ENCODE measurements at regions of chr11 and their contacts with region 1.

Region 1: DNA sequence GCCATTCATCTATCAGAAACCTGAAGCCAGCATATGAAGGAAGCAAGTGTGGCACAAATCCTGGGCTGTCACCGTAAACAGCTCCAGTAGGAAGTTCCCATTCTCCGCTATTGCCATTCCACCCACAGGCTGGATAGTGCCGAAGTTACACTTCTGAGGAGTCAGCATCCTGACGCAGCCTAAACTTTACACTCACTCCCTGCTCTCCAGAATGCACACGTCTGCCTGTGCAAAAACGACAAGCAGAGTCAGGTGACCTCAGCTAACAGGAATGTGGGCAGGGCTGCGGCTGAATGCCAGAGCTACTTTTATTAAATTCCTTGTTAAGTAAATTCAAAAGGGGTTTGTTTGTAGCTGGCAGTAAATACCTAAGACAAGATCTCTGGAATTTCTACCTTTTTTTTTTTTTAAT is 33.7 kb downstream of the NFRKB start:
- DNase-seq: no peak
- ATAC-seq: no peak
- H3K4me3 ChIP-seq: no peak overlapping the region
- H3K4me3 Mint-ChIP-seq: peak overlapping the region in 3 of 10 donors; percentile 22 to 69 (median 58)
- H3K27ac ChIP-seq: peak overlapping the region; percentile 25
- H3K27ac Mint-ChIP-seq: peak overlapping the region; percentile 84 to 98 (median 95)
- H3K4me1 ChIP-seq: peaks cover 0 to 37% of the 10 kb centered on the region in 2 donors
- H3K4me1 Mint-ChIP-seq: peaks cover 19 to 70% (median 54%) of the 10 kb centered on the region in 7 donors
- H3K27me3 ChIP-seq: no peaks in the 10 kb centered on the region
- H3K27me3 Mint-ChIP-seq: no peaks in the 10 kb centered on the region

Region 2: GRCh38 chr11:129766898-129767604 is 94.7 kb before region 1 on chr11:
- CTCF ChIA-PET with region 1: no interaction called
- POLR2A ChIA-PET with region 1: no interaction called
- intact Hi-C with region 1: loop called in 1 of 2 experiments (anchors 5 kb)
- DNase-seq: peak in 6 of 9 donors; percentile 14 to 39 (median 20)
- ATAC-seq: peak; percentile 40
- H3K4me3 ChIP-seq: no peak overlapping the region
- H3K4me3 Mint-ChIP-seq: peak overlapping the region in 2 of 10 donors; percentile 1 to 50
- H3K27ac ChIP-seq: no peak overlapping the region
- H3K27ac Mint-ChIP-seq: peak overlapping the region in 2 of 9 donors; percentile 6 to 29
- H3K4me1 ChIP-seq: no peaks in the 10 kb centered on the region
- H3K4me1 Mint-ChIP-seq: peaks cover 0 to 11% (median 5%) of the 10 kb centered on the region in 7 donors
- H3K27me3 ChIP-seq: no peaks in the 10 kb centered on the region
- H3K27me3 Mint-ChIP-seq: peaks cover 0 to 10% (median 4%) of the 10 kb centered on the region in 5 donors

Region 3: GRCh38 chr11:129803533-129803932 is 58.2 kb before region 1 on chr11:
- CTCF ChIA-PET with region 1: interaction called, 4 read pairs
- POLR2A ChIA-PET with region 1: interaction called, 16 read pairs
- intact Hi-C with region 1: no loop called
- DNase-seq: no peak
- ATAC-seq: no peak
- H3K4me3 ChIP-seq: no peak overlapping the region
- H3K4me3 Mint-ChIP-seq: peak overlapping the region; percentile 64 to 85 (median 78)
- H3K27ac ChIP-seq: peak overlapping the region; percentile 17
- H3K27ac Mint-ChIP-seq: peak overlapping the region; percentile 44 to 99 (median 91)
- H3K4me1 ChIP-seq: peaks cover 0 to 31% of the 10 kb centered on the region in 2 donors
- H3K4me1 Mint-ChIP-seq: peaks cover 25 to 90% (median 73%) of the 10 kb centered on the region in 7 donors
- H3K27me3 ChIP-seq: no peaks in the 10 kb centered on the region
- H3K27me3 Mint-ChIP-seq: peaks cover 0 to 37% (median 0%) of the 10 kb centered on the region in 5 donors

Region 4: DNA sequence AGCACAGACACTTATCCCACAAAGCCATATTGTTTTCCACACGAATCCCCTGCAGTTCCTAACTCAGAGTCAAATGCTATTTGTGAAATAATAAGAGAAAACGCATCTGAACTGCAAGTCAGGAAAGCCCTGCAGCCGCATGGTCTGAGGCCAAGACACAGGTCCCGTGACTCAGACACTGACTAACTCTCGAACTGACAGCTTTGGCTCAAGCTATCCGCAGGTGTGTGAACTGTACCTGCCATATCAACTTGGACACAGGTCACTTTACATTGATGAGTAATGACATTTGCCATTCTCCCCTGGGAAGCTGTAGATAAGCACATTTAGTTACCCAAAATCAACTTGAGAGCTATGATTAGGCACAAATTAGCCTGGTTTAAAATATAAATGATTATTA is 68.6 kb after region 1 on chr11:
- CTCF ChIA-PET with region 1: no interaction called
- POLR2A ChIA-PET with region 1: no interaction called
- intact Hi-C with region 1: no loop called
- DNase-seq: no peak
- ATAC-seq: peak; percentile 54
- H3K4me3 ChIP-seq: no peak overlapping the region
- H3K4me3 Mint-ChIP-seq: no peak overlapping the region
- H3K27ac ChIP-seq: no peak overlapping the region
- H3K27ac Mint-ChIP-seq: no peak overlapping the region
- H3K4me1 ChIP-seq: no peaks in the 10 kb centered on the region
- H3K4me1 Mint-ChIP-seq: no peaks in the 10 kb centered on the region
- H3K27me3 ChIP-seq: no peaks in the 10 kb centered on the region
- H3K27me3 Mint-ChIP-seq: no peaks in the 10 kb centered on the region

Region 5: DNA sequence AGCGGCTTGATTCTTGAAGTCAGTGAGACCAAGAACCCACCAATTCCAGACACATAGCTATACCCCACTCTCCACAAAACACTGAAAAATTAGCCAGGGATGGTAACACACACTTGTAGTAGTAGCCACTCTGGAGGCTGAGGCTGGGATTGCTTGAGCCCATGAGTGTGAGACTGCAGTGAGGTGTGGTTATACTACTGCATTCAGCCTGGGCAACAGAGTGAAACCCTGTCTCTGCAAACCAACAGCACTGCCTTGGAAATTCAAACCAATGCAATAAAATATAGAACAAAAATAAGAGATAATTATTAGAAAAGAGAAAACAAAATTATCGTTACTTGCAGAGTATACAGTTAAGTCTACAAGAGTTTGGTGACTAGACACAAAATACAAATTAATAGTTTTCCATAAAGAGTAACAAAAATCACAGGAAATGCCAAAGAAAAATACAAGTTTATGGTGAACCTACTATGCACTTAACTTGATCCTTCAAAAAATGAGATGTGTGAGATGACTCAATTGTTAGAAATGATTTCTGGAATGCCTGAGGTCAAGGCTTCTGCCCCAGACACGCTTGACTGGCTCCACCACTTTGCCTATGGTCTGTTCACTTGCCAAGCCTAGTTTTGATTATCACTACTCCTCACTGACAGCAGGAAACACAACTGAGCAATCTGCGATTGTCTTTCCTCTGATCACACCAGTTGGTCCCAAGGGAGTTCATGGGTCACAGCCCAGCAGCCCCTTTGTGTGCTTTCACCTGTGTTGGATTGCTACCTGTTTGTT is 161.3 kb after region 1 on chr11:
- CTCF ChIA-PET with region 1: no interaction called
- POLR2A ChIA-PET with region 1: no interaction called
- intact Hi-C with region 1: no loop called
- DNase-seq: no peak
- ATAC-seq: no peak
- H3K4me3 ChIP-seq: no peak overlapping the region
- H3K4me3 Mint-ChIP-seq: no peak overlapping the region
- H3K27ac ChIP-seq: no peak overlapping the region
- H3K27ac Mint-ChIP-seq: no peak overlapping the region
- H3K4me1 ChIP-seq: no peaks in the 10 kb centered on the region
- H3K4me1 Mint-ChIP-seq: no peaks in the 10 kb centered on the region
- H3K27me3 ChIP-seq: no peaks in the 10 kb centered on the region
- H3K27me3 Mint-ChIP-seq: peaks cover 0 to 3% (median 0%) of the 10 kb centered on the region in 5 donors

Measured in naive thymus-derived CD4-positive, alpha-beta T cell (primary cell).